Ascending aorta (tissue), 2 donors: ENCODE measurements at regions of chr10 and their contacts with region 1.

Region 1: DNA sequence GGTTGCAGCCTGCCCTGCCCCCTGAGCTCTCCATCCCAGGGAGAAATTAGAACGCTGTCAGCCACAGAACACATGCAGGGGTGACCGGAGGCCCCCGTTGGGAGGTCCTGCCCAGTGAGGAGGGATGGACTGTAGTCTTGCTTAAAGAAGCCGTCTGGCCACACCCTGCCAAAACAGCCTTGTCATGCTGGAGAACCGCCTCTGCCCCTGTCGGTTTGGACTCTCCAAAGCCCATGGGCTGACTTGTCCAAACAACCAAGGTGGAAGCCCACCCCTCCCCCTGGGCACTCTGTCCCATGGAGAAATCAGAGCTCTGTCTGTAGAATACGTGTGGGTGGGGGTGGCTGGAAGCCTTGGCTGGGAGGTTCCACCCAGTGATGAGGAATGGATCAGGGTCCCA is 12.7 kb upstream of the TBATA start:
- DNase-seq: peak in 1 of 2 donors; percentile 50
- H3K4me3 ChIP-seq: no peak overlapping the region
- H3K27ac ChIP-seq: no peak overlapping the region
- H3K4me1 ChIP-seq: no peaks in the 10 kb centered on the region
- H3K27me3 ChIP-seq: no peaks in the 10 kb centered on the region
- CTCF ChIP-seq: no peak

Region 2: DNA sequence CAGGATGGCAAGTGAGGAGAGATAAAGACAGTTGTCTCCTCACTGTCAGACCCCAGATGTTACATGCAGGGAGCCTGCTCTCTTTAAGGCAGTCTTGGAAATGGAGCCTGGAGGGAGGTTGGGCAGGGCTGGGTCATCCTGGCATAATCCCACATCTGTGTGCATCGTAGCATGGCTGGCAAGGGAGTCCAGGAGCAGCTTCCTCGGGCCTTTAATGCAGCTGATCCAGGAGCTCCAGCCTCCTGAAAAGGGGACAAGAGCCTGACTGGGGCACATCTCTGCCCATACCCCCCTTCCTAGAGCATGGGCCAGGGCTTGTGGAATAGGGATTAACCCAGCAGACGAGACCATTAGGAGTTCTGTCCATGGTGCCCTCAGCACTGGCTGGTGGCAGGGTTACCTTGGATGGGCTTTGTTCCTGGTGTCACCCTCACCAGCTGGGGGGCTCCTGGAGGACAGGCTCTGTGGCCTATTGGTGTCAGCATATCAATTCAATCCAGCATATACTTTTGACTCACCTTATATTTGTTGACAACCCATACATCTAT is 47.6 kb before region 1 on chr10:
- intact Hi-C with region 1: loop called (anchors 2 kb)
- DNase-seq: no peak
- H3K4me3 ChIP-seq: no peak overlapping the region
- H3K27ac ChIP-seq: no peak overlapping the region
- H3K4me1 ChIP-seq: peaks cover 0 to 3% of the 10 kb centered on the region in 2 donors
- H3K27me3 ChIP-seq: no peaks in the 10 kb centered on the region
- CTCF ChIP-seq: no peak